Cardiac septum (tissue), 1 donor: ENCODE measurements at regions of chr7 and their contacts with region 1.

Region 1: GRCh38 chr7:123602648-123603047 is 1.0 kb downstream of the ASB15 start:
- DNase-seq: no peak

Region 2: GRCh38 chr7:123655614-123656013 is 53.0 kb after region 1 on chr7 and contains the start of gene LMOD2:
- intact Hi-C with region 1: loop called (anchors 2 kb)
- DNase-seq: peak; percentile 88
- total RNA-seq, gene LMOD2: 1,161 TPM